Common myeloid progenitor, CD34-positive (primary cell): ENCODE measurements at regions of chr5 and their contacts with region 1.

Region 1: DNA sequence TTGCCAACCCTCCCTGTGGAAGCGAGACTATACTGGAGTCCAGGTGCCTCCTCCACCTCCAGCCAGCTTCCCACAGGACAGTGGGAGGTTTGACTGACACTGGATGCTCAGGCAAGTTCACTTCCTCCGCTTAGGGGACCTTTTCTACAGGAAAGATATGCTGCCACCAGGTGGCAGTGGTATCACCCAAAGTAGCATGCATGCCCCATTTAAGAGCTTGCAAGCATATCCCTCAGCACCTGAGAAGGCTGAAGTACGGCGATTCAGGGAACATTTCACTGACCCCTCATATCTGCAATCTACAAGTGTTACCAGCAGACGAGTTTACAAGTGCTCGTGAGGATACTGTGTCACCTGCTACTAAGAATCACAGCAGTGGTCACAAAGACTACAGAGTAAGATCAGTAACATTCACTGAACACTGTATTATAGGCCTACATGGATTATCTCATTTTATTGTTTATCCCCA is 75.5 kb downstream of the KLHL3 start:
- DNase-seq: peak; percentile 77 to 90 (median 85)
- H3K4me3 ChIP-seq: no peak overlapping the region
- H3K27ac ChIP-seq: no peak overlapping the region
- H3K4me1 ChIP-seq: peaks cover 0 to 3% (median 0%) of the 10 kb centered on the region in 4 experiments
- H3K27me3 ChIP-seq: no peaks in the 10 kb centered on the region

Region 2: DNA sequence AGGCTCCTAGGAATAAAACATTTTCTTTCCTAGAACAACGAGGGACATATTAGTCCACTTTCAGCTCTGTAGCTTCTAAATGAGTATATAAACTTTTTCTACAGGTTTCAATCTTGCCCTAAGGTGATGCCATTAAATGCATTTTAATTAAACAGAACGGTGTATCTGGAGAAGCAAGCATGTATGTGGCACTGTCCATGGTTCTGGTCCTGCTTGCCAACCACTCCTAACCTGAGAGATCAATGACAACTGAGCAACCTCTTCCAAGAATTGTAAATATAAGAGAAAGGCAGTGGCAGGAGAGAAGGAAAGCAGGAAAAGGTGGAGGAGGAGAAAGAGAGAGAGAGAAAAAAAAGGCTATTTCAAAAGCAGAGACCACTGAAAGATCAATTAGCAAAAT is 65.7 kb before region 1 on chr5:
- CTCF ChIA-PET with region 1: no interaction called
- POLR2A ChIA-PET with region 1: no interaction called
- DNase-seq: peak in 1 of 3 donors; percentile 25
- H3K4me3 ChIP-seq: no peak overlapping the region
- H3K27ac ChIP-seq: no peak overlapping the region
- H3K4me1 ChIP-seq: peaks cover 0 to 14% (median 9%) of the 10 kb centered on the region in 4 experiments
- H3K27me3 ChIP-seq: peaks cover 0 to 5% (median 1%) of the 10 kb centered on the region in 5 experiments

Region 3: DNA sequence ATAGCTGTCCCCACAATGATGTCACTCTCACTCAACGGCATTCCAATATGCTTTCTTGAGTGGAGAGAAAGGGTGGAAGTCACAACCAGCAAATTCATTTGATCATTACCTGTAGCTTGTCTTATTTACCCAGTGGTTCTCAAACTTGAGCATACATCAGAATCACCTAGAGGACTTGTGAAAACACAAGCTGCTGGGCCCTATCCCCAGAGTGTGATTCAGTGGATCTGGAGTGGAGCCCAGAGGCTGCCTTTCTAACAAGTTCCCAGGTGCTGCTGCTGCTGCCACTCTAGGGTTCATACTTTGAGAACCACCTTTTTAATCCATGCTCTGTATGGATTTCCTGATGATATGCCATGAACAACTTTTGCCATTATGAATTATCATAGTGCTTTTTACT is 19.2 kb before region 1 on chr5:
- CTCF ChIA-PET with region 1: interaction called, 10 read pairs
- POLR2A ChIA-PET with region 1: no interaction called
- DNase-seq: no peak
- H3K4me3 ChIP-seq: no peak overlapping the region
- H3K27ac ChIP-seq: no peak overlapping the region
- H3K4me1 ChIP-seq: peaks cover 0 to 2% (median 0%) of the 10 kb centered on the region in 4 experiments
- H3K27me3 ChIP-seq: no peaks in the 10 kb centered on the region

Region 4: GRCh38 chr5:137695651-137696428 is 35.5 kb after region 1 on chr5:
- CTCF ChIA-PET with region 1: interaction called, 51 read pairs
- POLR2A ChIA-PET with region 1: no interaction called
- DNase-seq: peak; percentile 54 to 92 (median 83)
- H3K4me3 ChIP-seq: peak overlapping the region in 3 of 7 experiments; percentile 15 to 29 (median 18)
- H3K27ac ChIP-seq: peak overlapping the region; percentile 18 to 65
- H3K4me1 ChIP-seq: peaks cover 18 to 68% (median 47%) of the 10 kb centered on the region in 4 experiments
- H3K27me3 ChIP-seq: no peaks in the 10 kb centered on the region

Region 5: GRCh38 chr5:137735555-137736284 is 75.3 kb after region 1 on chr5 and contains the start of gene KLHL3:
- CTCF ChIA-PET with region 1: interaction called, 338 read pairs
- POLR2A ChIA-PET with region 1: interaction called, 3 read pairs
- DNase-seq: peak in 2 of 3 donors; percentile 69 to 83
- H3K4me3 ChIP-seq: peak within 1 kb of the TSS; percentile 28 to 92 (median 74)
- H3K27ac ChIP-seq: peak within 1 kb of the TSS in 1 of 2 experiments; percentile 11
- H3K4me1 ChIP-seq: peaks cover 26 to 61% (median 38%) of the 10 kb centered on the region in 4 experiments
- H3K27me3 ChIP-seq: no peaks in the 10 kb centered on the region

Region 6: DNA sequence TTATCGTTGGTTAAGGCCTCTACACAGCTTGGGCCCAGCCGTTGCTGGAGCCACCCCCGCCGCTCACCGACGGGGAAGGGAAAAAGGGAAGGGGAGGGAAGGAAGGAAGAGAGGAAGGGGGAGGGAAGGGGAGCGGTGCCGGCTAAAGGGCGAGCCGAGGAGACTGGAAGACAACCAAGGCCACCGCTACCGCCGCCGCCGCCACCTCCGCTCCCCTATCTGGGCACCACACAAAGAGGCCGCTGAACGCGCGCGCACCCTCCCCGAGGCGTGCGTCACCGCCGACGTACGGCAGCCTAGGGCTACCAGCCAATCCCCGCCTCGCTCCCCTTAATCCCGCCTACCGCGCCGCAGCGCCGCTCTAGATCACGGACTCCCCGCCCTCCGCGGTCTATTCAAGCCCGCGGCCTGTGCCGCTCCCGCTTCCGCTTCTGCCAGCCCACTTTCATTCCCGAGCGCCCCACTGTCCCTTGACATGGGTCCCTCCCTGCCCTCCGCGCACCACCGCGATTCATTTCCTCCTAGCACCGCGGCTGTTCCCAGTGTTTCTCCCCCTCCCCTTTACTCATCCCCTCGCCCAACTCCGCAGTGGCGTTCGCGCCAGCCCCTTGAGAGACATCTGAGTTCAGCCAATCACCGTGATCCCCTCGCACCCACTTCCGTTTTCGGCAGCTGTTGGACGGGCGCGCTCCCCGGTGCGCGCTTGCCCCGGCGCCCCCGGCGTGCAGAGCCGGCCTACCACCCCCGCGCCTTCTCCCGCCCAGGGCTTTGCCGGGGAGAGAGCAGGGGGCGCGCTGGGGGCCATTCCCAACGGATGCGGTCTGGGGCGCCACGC is 94.0 kb after region 1 on chr5 and contains the start of gene HNRNPA0:
- CTCF ChIA-PET with region 1: interaction called, 338 read pairs
- POLR2A ChIA-PET with region 1: interaction called, 3 read pairs
- DNase-seq: peak; percentile 99 to 100 (median 100)
- H3K4me3 ChIP-seq: peak within 1 kb of the TSS; percentile 85 to 100 (median 99)
- H3K27ac ChIP-seq: peak within 1 kb of the TSS; percentile 100
- H3K4me1 ChIP-seq: peaks cover 9 to 33% (median 23%) of the 10 kb centered on the region in 4 experiments
- H3K27me3 ChIP-seq: no peaks in the 10 kb centered on the region

Region 7: GRCh38 chr5:137792303-137792702 is 131.9 kb after region 1 on chr5:
- CTCF ChIA-PET with region 1: no interaction called
- POLR2A ChIA-PET with region 1: no interaction called
- DNase-seq: no peak
- H3K4me3 ChIP-seq: no peak overlapping the region
- H3K27ac ChIP-seq: no peak overlapping the region
- H3K4me1 ChIP-seq: no peaks in the 10 kb centered on the region
- H3K27me3 ChIP-seq: no peaks in the 10 kb centered on the region